Endothelial cell of umbilical vein (primary cell): ENCODE measurements at regions of chr17 and their contacts with region 1.

Region 1: GRCh38 chr17:63549946-63550807 is at the start of gene DCAF7:
- DNase-seq: peak; percentile 100
- H3K4me3 ChIP-seq: peak within 1 kb of the TSS; percentile 42 to 77 (median 64)
- H3K27ac ChIP-seq: peak within 1 kb of the TSS; percentile 42
- H3K4me1 ChIP-seq: peaks cover 14% of the 10 kb centered on the region
- H3K27me3 ChIP-seq: no peaks in the 10 kb centered on the region
- CTCF ChIP-seq: no peak
- POLR2A ChIP-seq: peak; percentile 74
- total RNA-seq, gene DCAF7: 89.6 and 100 TPM in 2 replicates

Region 2: DNA sequence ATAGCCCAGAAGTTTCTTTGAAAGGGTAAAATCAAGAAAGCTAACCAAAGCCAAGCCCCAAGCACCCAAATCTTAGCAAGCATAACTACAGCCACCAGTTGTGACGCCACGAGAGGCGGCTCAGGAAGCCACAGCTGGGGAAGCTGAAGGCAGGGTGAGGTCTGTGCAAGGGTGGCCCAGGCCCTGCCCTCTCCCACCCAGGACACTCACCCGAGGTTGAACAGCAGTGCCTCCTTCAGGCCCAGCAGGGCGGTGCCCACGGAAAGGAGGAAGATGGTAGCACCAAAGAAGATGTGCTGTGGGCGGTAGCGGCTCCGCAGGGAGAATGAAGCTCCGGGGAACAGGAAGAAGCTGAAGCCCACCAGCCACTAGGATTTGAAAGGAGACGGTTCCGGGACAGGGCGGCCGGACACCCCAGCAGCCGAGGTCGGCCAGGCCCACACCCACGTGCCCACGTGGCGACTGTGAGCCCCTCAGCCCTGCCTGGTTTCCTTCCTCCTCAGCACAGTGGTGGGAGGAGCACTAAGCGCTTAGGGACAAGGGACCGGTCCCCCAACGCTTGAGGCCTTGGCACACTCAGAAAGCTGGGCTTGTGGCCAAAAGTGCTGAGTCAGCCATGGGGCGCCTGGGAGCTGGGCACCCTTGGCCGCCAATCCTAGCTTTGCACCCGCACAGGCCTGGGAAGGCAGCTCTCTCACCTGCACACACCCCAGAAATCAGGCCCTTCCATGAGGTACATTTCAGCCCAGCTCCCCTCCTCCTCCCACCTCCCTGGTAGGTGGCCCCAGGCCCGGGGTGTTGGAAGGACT is 115.1 kb before region 1 on chr17:
- CTCF ChIA-PET with region 1: no interaction called
- POLR2A ChIA-PET with region 1: no interaction called
- dilution Hi-C with region 1: no loop called
- intact Hi-C with region 1: loop called (anchors 2 kb)
- DNase-seq: peak; percentile 39
- H3K4me3 ChIP-seq: no peak overlapping the region
- H3K27ac ChIP-seq: no peak overlapping the region
- H3K4me1 ChIP-seq: peaks cover 35% of the 10 kb centered on the region
- H3K27me3 ChIP-seq: no peaks in the 10 kb centered on the region
- CTCF ChIP-seq: peak; percentile 23 to 27
- POLR2A ChIP-seq: no peak

Region 3: DNA sequence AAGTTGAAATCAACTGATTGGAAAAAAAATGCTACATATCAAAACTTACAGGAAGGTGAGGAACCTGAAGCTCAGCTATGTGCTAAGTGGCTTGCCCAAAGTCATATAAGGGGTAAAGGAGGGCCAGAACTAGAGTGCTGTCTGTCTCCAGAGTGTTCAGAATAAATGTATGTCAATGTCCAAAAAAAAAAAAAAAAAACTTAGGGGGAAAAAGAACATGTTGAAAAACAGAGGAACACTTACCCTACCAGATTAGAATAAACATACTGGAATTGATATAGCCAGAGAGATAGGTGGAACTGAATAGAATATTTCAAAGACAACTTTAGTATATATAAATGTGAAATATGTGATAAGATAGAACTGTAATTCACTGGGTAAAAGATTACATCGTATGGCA is 11.7 kb after region 1 on chr17:
- CTCF ChIA-PET with region 1: interaction called, 12 read pairs
- POLR2A ChIA-PET with region 1: no interaction called
- dilution Hi-C with region 1: no loop called
- intact Hi-C with region 1: no loop called
- DNase-seq: no peak
- H3K4me3 ChIP-seq: no peak overlapping the region
- H3K27ac ChIP-seq: no peak overlapping the region
- H3K4me1 ChIP-seq: no peaks in the 10 kb centered on the region
- H3K27me3 ChIP-seq: no peaks in the 10 kb centered on the region
- CTCF ChIP-seq: no peak
- POLR2A ChIP-seq: no peak